Ovary (tissue), 10 donors: ENCODE measurements at regions of chr20 and their contacts with region 1.

Region 1: GRCh38 chr20:41249406-41250281 is 67.9 kb downstream of the ZHX3 start:
- DNase-seq: peak; percentile 78 to 86 (median 85)
- H3K4me3 ChIP-seq: no peak overlapping the region
- H3K27ac ChIP-seq: peak overlapping the region; percentile 79 to 81
- H3K4me1 ChIP-seq: peaks cover 28% of the 10 kb centered on the region
- H3K27me3 ChIP-seq: no peaks in the 10 kb centered on the region
- CTCF ChIP-seq: peak; percentile 8 to 46 (median 19)
- EP300 ChIP-seq: peak; percentile 41
- POLR2A ChIP-seq: no peak

Region 2: DNA sequence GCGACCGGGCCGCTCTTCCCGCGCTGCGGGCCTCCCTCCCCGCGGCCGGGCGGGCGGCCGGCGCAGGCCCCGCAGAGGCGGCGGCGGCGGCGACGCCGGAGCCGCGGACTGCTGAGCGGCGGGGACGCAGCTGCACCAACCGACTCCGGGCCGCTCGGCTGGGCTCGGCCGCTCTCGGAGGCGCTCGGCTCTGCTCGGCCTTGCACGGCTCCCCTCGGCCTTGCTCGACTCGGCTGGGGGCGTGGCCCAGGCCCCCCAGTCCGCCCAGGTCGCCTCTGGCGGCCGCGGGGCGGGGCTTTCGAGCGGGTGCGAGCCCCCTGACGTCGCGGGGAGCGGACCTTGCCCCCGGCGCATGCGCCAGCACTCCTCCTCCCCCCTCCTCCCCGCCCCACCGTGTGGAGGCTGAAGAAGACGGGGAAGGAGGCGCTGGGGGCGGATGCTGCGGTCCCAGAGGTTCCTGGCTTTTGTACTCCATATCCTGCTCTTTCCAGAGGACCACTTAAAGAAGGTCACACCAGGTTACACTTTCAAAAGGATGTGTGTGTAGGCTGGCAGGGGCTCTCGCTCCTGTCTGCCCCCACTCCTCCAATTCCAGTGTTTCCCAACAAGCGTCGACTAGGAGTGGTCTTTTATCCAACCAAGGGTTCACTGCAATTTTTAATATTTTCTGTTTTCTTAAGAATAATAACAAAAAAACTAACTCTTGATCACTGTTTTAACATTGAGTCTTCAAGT is 68.1 kb after region 1 on chr20 and contains the start of gene ZHX3:
- intact Hi-C with region 1: loop called in 2 of 4 experiments (anchors 5 to 10 kb)
- DNase-seq: peak; percentile 97 to 99 (median 98)
- H3K4me3 ChIP-seq: peak within 1 kb of the TSS; percentile 85
- H3K27ac ChIP-seq: peak within 1 kb of the TSS; percentile 74 to 81
- H3K4me1 ChIP-seq: peaks cover 13% of the 10 kb centered on the region
- H3K27me3 ChIP-seq: no peaks in the 10 kb centered on the region
- CTCF ChIP-seq: no peak
- EP300 ChIP-seq: no peak
- POLR2A ChIP-seq: peak; percentile 40
- total RNA-seq, gene ZHX3: 17.5 to 72.0 (median 53.0) TPM